Endothelial cell of umbilical vein (primary cell): ENCODE measurements at regions of chr16 and their contacts with region 1.

Region 1: DNA sequence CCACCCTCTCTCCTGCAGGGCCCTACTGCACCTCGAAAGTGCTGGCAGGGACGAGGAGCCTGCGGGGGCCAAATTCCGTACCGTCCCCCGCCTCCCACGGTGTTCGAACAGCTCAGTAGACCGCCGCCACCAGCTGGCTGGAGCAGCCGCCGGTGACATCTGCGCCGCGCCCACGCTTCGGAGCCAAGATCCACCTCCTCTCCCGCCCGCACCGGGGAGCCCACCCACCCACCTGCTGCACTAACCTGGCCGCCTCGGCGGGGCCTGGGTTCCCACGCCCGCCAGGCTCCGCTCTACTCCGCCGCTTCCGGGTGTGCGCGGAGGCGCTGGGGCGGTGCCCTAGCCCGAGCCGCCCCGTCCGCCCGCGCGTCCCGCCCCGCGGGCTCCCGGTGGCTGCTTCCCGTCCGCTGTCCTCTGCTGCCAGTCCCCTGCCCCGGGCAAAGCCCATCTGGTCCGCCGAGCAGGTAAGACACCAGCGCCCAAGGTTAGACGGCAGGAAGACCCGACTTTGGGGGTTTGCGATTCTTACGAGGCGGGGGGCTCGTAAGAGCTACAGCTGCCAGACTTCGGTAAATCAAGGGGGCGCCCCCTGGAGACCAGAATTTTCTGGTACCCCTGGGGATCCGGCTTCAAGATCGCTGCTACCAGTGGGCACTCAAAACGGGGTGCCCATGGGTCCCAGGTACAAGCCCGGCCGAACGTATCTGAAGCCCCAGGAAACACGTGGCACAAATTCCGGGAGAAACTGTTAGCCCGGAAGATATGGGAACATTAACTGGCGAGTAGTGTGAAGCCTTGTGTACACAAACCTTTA is at the starts of genes FBXL8 and TRADD:
- DNase-seq: peak; percentile 79
- H3K4me3 ChIP-seq: peak within 1 kb of the TSS; percentile 78 to 89 (median 81)
- H3K27ac ChIP-seq: peak within 1 kb of the TSS; percentile 38
- H3K4me1 ChIP-seq: peaks cover 18% of the 10 kb centered on the region
- H3K27me3 ChIP-seq: peaks cover 19 to 21% of the 10 kb centered on the region in 2 experiments
- CTCF ChIP-seq: peak; percentile 34 to 59
- POLR2A ChIP-seq: peak; percentile 70
- total RNA-seq, gene FBXL8: 5.4 and 7.0 TPM in 2 replicates
- total RNA-seq, gene TRADD: 15.2 and 17.4 TPM in 2 replicates

Region 2: DNA sequence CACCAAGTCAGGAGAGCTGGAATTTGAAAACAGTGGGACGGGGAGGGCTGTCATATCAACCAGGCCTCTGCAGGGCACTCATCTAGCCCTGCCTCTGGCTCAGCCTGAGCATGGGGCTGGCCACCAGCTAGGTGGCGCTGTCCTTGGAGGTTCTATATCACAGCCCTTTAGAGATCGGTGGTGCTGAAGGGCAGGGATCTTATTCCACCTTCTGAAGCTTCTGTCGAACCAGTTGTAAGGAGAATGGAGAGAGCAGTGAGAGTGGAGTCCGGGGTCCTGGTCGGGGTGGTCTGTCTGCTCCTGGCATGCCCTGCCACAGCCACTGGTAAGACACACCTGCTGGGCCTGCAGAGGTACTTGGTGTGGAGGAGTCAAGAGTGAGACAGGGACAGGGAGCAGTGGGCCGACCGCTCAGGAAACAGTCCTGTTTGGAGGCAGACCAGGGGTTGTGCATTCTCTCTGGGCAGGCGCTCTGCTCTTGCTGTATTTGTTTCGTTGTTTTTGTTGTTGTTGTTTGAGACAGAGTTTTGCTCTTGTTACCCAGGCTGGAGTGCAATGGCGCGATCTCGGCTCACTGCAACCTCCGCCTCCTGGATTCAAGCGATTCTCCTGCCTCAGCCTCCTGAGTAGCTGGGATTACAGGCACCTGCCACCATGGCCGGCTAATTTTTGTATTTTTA is 198.6 kb before region 1 on chr16 and contains the start of gene CES3:
- CTCF ChIA-PET with region 1: interaction called, 26 read pairs
- POLR2A ChIA-PET with region 1: no interaction called
- dilution Hi-C with region 1: no loop called
- intact Hi-C with region 1: no loop called
- DNase-seq: peak; percentile 46
- H3K4me3 ChIP-seq: no peak within 1 kb of the TSS
- H3K27ac ChIP-seq: no peak within 1 kb of the TSS
- H3K4me1 ChIP-seq: no peaks in the 10 kb centered on the region
- H3K27me3 ChIP-seq: peaks cover 2 to 4% of the 10 kb centered on the region in 2 experiments
- CTCF ChIP-seq: peak; percentile 88 to 94
- POLR2A ChIP-seq: no peak
- total RNA-seq, gene CES3: not detected in 2 replicates

Region 3: DNA sequence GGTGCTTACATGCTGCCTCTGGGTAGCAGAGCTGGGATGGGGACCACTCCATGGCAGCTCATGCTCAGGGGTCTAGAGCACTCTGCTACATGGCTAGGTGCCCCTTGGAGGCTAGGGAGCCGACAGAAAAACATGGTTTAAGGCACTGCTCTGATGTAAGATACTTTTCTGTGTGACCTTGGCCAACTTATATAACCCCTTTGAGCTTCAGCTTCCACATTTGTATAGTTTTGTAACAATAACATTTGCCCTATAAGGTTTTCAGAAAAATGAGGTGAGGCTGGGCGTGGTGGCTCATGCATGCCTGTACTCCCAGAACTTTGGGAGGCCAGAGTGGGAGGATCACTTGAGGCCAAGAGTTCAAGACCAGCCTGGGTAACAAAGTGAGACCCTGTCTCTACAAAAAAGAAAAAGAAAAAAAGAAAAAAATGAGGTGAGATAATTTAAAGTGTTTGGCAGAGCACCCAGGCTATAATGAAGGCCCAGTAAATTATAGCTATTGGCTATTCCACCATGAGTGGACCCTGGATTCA is 168.2 kb before region 1 on chr16:
- CTCF ChIA-PET with region 1: interaction called, 20 read pairs
- POLR2A ChIA-PET with region 1: no interaction called
- dilution Hi-C with region 1: no loop called
- intact Hi-C with region 1: no loop called
- DNase-seq: no peak
- H3K4me3 ChIP-seq: no peak overlapping the region
- H3K27ac ChIP-seq: no peak overlapping the region
- H3K4me1 ChIP-seq: no peaks in the 10 kb centered on the region
- H3K27me3 ChIP-seq: no peaks in the 10 kb centered on the region
- CTCF ChIP-seq: no peak
- POLR2A ChIP-seq: no peak

Region 4: DNA sequence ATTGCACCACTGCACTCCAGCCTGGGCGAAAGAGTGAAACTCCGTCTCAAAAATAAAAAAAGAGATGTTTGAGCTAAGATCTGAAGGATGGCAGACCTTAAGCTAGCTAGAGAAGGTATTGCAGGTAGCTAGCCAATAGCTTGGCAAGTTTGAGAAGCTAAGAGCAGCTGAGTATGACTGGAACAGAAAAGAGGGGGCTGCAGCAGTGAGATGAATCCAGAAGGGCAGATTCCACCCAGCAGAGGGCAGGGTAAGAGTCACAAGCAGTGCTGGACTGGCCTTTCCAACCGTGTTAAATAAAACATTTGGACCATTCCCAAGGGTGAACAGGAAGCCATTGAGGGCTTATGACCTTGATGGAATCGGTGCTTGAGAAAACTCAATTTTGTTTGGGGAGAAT is 55.7 kb before region 1 on chr16:
- CTCF ChIA-PET with region 1: interaction called, 58 read pairs
- POLR2A ChIA-PET with region 1: no interaction called
- dilution Hi-C with region 1: no loop called
- intact Hi-C with region 1: loop called (anchors 1 kb)
- DNase-seq: peak; percentile 46
- H3K4me3 ChIP-seq: no peak overlapping the region
- H3K27ac ChIP-seq: no peak overlapping the region
- H3K4me1 ChIP-seq: peaks cover 2% of the 10 kb centered on the region
- H3K27me3 ChIP-seq: no peaks in the 10 kb centered on the region
- CTCF ChIP-seq: peak; percentile 47 to 64
- POLR2A ChIP-seq: no peak

Region 5: DNA sequence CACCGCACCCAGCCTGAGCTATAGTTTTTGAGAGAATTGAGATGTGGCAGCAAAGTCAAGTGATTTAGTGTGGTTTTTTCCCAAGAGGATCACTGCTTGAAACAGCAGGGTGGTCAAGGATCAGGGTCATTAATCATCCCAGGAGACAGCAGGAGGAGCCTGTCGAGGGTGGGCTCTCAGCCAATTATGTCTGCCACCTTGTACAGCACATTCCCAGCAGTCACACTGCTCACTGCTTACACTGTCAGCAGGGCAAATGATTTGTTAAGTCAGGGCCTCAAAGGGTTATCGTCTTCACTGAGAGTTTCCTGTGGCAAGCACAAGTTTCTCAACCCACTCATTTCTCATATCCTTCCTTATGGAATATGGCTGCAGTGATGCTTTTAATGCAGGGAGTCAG is 22.2 kb before region 1 on chr16:
- CTCF ChIA-PET with region 1: interaction called, 67 read pairs
- POLR2A ChIA-PET with region 1: no interaction called
- dilution Hi-C with region 1: no loop called
- intact Hi-C with region 1: no loop called
- DNase-seq: peak; percentile 96
- H3K4me3 ChIP-seq: no peak overlapping the region
- H3K27ac ChIP-seq: no peak overlapping the region
- H3K4me1 ChIP-seq: peaks cover 9% of the 10 kb centered on the region
- H3K27me3 ChIP-seq: no peaks in the 10 kb centered on the region
- CTCF ChIP-seq: no peak
- POLR2A ChIP-seq: no peak

Region 6: DNA sequence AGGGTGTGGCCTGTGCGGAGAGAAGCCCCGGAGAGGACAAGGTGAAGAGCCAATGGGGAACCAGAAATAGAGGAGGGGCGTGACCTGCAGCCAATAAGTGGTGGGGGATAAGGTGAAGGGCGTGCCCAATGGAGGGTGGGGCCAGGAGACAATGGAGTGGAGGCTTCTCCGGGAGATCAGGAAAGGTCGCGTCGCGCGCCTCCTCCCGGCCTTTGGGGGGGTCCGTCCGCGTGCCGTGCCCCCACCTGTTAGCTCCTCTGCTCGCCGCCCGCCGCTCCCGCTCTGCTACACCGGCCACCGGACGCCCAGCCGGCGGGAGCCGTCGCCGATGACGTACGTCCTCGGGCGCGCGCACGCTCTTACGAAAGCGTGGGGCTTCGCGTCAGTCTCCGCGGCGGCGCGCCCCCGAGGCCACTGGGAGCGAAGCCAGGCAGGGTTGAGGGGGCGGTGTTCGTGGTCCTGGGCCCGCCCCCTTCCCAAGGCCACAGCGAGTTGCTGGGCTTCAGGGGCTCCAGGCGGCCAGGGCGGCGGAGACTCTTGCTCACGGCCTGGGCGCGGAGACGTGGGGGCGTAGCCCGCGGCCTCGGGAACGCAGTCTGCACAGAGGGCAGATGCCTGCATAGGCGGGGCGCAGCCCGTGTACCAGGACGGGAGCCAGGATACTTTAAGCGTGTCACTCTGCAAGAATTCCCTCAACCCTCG is 24.0 kb after region 1 on chr16 and contains the start of gene MATCAP1:
- CTCF ChIA-PET with region 1: interaction called, 30 read pairs
- POLR2A ChIA-PET with region 1: interaction called, 3 read pairs
- dilution Hi-C with region 1: no loop called
- intact Hi-C with region 1: loop called (anchors 1 kb)
- DNase-seq: peak; percentile 98
- H3K4me3 ChIP-seq: peak within 1 kb of the TSS; percentile 75 to 90 (median 88)
- H3K27ac ChIP-seq: peak within 1 kb of the TSS; percentile 95
- H3K4me1 ChIP-seq: peaks cover 33% of the 10 kb centered on the region
- H3K27me3 ChIP-seq: no peaks in the 10 kb centered on the region
- CTCF ChIP-seq: no peak
- POLR2A ChIP-seq: peak; percentile 70
- total RNA-seq, gene MATCAP1: 45.8 and 53.3 TPM in 2 replicates